Right cardiac atrium (tissue), 5 donors: ENCODE measurements at regions of chr15 and their contacts with region 1.

Region 1: DNA sequence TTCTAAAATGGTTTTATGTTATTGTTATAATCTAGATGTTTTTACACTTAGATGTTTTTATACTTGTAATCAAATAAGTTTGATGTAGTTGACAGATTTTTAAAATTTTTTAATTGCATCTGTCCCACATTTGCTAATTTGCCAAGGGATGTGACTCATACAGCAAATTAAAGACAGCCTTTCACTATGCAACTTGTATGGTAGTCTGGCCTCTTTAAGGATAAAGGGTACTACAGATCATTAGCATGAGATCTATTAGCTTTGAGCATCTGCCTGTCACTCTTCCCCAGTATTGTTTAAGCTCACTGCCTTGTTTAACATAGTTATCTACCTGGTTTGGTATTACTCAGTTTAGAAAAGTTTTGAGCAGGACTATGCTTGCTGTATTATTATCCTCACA is 83.0 kb downstream of the NPTN start:
- DNase-seq: no peak
- ATAC-seq: no peak
- H3K4me3 ChIP-seq: no peak overlapping the region
- H3K27ac ChIP-seq: no peak overlapping the region
- H3K4me1 ChIP-seq: peaks cover 1% of the 10 kb centered on the region
- H3K27me3 ChIP-seq: no peaks in the 10 kb centered on the region

Region 2: DNA sequence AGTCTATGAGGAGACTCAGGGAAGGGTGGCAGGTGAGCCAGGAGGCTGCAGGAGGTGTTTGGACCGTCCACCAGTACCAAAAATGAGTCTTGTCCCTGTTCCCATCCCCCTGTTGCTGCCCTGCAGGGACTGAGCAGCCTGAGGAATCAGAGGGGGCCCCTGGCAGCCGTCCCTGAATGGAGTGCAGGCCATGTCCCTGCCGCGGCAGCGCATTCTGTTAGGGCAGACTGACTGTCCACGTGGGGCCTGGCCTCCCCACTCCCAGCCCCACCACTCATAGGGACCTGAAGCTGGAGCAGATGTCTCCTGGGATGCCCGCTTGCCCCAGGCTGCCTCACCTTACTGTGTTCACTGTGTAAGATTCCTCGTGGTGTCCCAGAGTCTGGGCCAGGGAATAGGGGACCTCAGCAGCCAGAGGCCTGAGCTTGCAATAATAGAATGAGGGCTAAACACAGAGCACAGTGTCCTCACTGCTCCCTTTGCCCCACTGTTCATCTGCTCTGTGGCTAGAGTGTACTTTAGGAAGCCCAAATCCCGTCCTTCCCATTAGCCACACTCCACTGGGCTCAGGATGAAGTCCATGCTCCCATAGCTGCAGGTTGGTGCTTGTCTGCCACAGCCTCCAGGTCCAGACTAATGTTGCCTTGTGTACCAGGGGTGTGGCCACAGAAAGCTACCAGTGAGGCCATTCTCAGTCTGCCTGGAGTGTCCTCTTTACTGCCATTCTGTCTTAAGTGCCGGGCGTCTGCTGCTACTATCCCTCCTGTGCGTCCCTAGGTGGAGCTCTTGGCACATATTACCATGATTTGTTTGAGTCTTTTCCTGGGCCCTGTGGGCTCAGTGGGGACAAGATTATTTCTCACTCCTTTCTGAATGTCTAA is 244.6 kb before region 1 on chr15:
- intact Hi-C with region 1: loop called in 2 of 4 experiments (anchors 10 kb)
- DNase-seq: no peak
- ATAC-seq: peak; percentile 64 to 74
- H3K4me3 ChIP-seq: no peak overlapping the region
- H3K27ac ChIP-seq: no peak overlapping the region
- H3K4me1 ChIP-seq: no peaks in the 10 kb centered on the region
- H3K27me3 ChIP-seq: no peaks in the 10 kb centered on the region

Region 3: DNA sequence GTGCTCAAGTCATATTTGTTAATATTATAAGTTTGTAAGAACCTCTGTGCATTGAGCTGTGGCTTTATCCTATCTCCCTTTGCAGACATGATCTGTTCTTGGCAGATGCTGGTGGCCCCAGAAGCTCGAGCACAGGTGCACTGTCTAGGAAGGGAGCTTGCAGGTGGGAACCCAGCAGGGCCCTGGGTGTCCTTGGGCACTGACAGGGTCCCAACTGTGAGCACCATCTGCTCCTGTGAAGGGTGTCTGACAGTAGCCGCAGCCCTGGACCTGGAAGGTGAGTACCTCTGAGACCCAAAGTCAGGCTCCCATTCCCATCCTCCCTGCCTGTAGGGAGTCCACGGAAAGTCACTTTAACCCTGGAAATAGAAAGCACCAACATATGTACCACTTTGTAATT is 109.6 kb before region 1 on chr15:
- intact Hi-C with region 1: no loop called
- DNase-seq: no peak
- ATAC-seq: no peak
- H3K4me3 ChIP-seq: no peak overlapping the region
- H3K27ac ChIP-seq: no peak overlapping the region
- H3K4me1 ChIP-seq: no peaks in the 10 kb centered on the region
- H3K27me3 ChIP-seq: no peaks in the 10 kb centered on the region

Region 4: GRCh38 chr15:73495171-73495570 is 55.0 kb before region 1 on chr15:
- intact Hi-C with region 1: no loop called
- DNase-seq: no peak
- ATAC-seq: no peak
- H3K4me3 ChIP-seq: no peak overlapping the region
- H3K27ac ChIP-seq: no peak overlapping the region
- H3K4me1 ChIP-seq: no peaks in the 10 kb centered on the region
- H3K27me3 ChIP-seq: no peaks in the 10 kb centered on the region